Activated B cell treated with CpG ODN at 0.5 μM for 24 hours (primary cell): ENCODE measurements at regions of chr12 and their contacts with region 1.

Region 1: GRCh38 chr12:22334410-22335290 is at the start of gene ST8SIA1:
- DNase-seq: no peak
- ATAC-seq: peak; percentile 19
- H3K4me3 Mint-ChIP-seq: peak within 1 kb of the TSS; percentile 82
- H3K27ac Mint-ChIP-seq: no peak within 1 kb of the TSS
- H3K4me1 Mint-ChIP-seq: peaks cover 22% of the 10 kb centered on the region
- H3K27me3 Mint-ChIP-seq: peaks cover 58% of the 10 kb centered on the region
- CTCF ChIP-seq: no peak
- total RNA-seq, gene ST8SIA1: 0.31 TPM in 1 of 2 replicates, not detected in the other

Region 2: DNA sequence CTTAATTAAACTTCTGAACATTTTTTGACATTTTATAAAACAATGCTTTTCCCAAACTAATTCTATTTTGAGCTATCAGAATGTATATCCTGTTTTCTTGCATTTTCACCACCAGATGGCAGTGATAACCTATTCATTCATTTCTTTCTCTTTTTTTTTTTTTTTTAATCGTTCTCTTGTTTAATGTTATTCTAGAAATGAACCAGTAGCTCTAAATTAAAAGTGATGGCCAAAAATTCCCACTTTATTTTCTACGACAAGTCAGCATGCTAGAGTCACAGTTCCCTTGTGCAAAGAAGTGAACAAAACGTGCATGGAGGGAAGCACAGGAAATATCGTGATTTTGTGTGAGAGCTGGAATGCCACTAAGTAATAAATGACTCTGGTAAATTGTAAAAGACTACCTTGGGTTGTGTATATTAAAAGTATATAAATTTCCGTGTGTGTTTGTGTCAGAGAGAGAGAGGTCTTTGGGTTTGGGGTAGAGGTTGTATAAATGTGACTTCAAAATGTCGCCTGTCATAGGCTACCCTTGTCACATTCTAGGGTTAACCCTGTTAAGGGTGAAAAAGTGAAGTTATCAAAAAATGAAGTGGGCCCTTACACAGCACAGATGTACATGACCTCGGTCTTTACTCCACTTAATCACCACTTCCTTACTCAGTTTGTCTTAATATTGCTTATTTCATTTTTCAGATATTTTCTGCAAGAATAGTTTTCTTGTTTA is 636.6 kb before region 1 on chr12:
- CTCF ChIA-PET with region 1: interaction called, 4 read pairs
- POLR2A ChIA-PET with region 1: no interaction called
- intact Hi-C with region 1: loop called (anchors 1 kb)
- DNase-seq: no peak
- ATAC-seq: no peak
- H3K4me3 Mint-ChIP-seq: no peak overlapping the region
- H3K27ac Mint-ChIP-seq: no peak overlapping the region
- H3K4me1 Mint-ChIP-seq: no peaks in the 10 kb centered on the region
- H3K27me3 Mint-ChIP-seq: peaks cover under 1% of the 10 kb centered on the region
- CTCF ChIP-seq: no peak

Region 3: GRCh38 chr12:22083167-22083566 is 251.5 kb before region 1 on chr12:
- CTCF ChIA-PET with region 1: no interaction called
- POLR2A ChIA-PET with region 1: no interaction called
- intact Hi-C with region 1: loop called (anchors 1 kb)
- DNase-seq: no peak
- ATAC-seq: peak; percentile 37
- H3K4me3 Mint-ChIP-seq: no peak overlapping the region
- H3K27ac Mint-ChIP-seq: no peak overlapping the region
- H3K4me1 Mint-ChIP-seq: no peaks in the 10 kb centered on the region
- H3K27me3 Mint-ChIP-seq: no peaks in the 10 kb centered on the region
- CTCF ChIP-seq: no peak

Region 4: GRCh38 chr12:22100958-22101748 is 233.5 kb before region 1 on chr12:
- CTCF ChIA-PET with region 1: interaction called, 4 read pairs
- POLR2A ChIA-PET with region 1: no interaction called
- intact Hi-C with region 1: loop called (anchors 1 kb)
- DNase-seq: no peak
- ATAC-seq: peak; percentile 52
- H3K4me3 Mint-ChIP-seq: no peak overlapping the region
- H3K27ac Mint-ChIP-seq: no peak overlapping the region
- H3K4me1 Mint-ChIP-seq: peaks cover 11% of the 10 kb centered on the region
- H3K27me3 Mint-ChIP-seq: peaks cover 8% of the 10 kb centered on the region
- CTCF ChIP-seq: no peak

Region 5: DNA sequence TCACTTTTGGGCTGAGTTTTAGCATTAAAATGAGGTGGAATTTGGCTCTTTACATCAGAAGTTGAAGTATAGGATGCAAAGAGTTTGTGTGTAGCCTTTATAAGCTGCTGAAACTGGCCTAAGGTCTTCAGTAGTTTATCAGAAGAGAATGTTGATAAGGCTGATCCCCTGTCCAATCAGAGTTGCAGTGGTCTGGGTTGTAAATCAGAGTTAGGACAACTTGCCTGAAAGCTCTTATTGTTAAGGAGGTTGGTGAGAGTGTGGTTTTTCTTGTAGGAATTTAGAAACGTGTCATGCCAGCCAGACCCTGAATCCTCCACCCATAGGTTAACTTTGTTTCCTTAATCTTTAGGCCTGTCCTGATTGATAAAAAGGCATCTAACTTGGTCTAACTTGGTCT is 143.7 kb before region 1 on chr12:
- CTCF ChIA-PET with region 1: no interaction called
- POLR2A ChIA-PET with region 1: no interaction called
- intact Hi-C with region 1: no loop called
- DNase-seq: no peak
- ATAC-seq: no peak
- H3K4me3 Mint-ChIP-seq: no peak overlapping the region
- H3K27ac Mint-ChIP-seq: no peak overlapping the region
- H3K4me1 Mint-ChIP-seq: no peaks in the 10 kb centered on the region
- H3K27me3 Mint-ChIP-seq: no peaks in the 10 kb centered on the region
- CTCF ChIP-seq: no peak

Region 6: DNA sequence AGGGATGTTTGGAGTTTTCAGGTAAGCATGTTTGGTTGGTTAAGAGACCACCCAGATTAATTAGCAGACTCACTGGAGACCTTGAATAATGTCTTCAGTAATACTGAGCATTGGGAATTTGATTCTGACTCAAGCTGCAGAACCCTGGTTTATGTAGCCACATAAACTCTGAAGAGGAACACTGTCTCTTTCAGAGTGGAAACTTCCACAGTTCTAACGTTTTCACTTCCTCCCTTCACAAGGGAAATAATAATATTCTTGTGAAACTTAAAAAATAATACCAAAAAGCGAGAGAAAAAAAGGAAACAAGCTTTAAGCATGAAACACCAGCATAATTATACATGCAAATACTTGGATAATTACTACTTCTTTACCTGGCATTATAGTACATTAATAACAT is 39.9 kb after region 1 on chr12:
- CTCF ChIA-PET with region 1: no interaction called
- POLR2A ChIA-PET with region 1: no interaction called
- intact Hi-C with region 1: no loop called
- DNase-seq: no peak
- ATAC-seq: peak; percentile 42
- H3K4me3 Mint-ChIP-seq: no peak overlapping the region
- H3K27ac Mint-ChIP-seq: no peak overlapping the region
- H3K4me1 Mint-ChIP-seq: peaks cover 11% of the 10 kb centered on the region
- H3K27me3 Mint-ChIP-seq: no peaks in the 10 kb centered on the region
- CTCF ChIP-seq: no peak